WTC11 (cell line): ENCODE measurements at regions of chr11 and their contacts with region 1.

Region 1: DNA sequence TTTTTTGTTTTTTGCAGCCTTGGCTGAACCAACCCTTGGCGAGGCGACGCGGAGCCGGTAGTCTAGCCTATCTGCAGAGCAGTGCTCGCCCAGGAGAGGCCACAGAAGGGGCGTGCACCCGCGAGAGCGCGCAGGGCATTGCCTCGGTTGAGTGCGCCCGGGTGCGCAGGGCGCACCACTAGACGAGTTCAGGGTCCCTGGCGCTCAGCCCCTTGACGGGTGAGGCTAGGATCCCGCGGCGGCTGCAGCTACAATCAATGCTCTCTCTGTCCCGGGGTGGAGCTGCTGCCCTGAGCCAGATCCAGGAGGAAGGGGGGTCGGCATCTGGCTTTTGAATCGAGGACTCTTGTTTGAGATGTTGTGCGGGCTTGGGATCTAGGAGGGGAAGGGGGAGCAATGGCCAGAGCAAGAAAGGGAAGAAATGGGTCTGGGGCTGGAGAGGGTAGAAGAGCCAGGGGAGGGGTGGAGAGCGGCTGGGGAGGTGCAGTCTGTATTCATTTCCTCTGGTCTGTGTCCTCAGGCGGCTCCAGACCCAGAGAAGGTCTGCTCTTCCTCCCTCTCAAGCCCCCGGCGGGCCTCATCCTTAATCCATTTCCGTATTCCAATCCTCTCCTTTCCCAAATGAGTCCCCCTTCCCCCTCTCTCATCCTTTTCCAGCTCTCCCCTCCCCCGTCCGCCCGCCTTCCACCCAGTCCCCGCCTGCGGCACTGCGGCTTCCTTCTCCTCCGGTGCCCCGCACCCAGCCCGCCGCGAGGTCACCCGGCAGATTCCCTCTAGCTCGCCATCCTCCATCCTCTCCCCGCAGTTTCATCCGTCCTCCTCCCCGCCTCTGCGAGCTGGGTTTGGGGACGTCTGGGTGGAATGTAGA is 797 bp downstream of the THY1 start:
- DNase-seq: peak; percentile 53
- ATAC-seq: peak; percentile 12
- H3K4me3 Mint-ChIP-seq: peak overlapping the region; percentile 96
- H3K27ac Mint-ChIP-seq: peak overlapping the region; percentile 92
- H3K4me1 Mint-ChIP-seq: peaks cover 81% of the 10 kb centered on the region
- H3K27me3 Mint-ChIP-seq: no peaks in the 10 kb centered on the region
- CTCF ChIP-seq: no peak

Region 2: DNA sequence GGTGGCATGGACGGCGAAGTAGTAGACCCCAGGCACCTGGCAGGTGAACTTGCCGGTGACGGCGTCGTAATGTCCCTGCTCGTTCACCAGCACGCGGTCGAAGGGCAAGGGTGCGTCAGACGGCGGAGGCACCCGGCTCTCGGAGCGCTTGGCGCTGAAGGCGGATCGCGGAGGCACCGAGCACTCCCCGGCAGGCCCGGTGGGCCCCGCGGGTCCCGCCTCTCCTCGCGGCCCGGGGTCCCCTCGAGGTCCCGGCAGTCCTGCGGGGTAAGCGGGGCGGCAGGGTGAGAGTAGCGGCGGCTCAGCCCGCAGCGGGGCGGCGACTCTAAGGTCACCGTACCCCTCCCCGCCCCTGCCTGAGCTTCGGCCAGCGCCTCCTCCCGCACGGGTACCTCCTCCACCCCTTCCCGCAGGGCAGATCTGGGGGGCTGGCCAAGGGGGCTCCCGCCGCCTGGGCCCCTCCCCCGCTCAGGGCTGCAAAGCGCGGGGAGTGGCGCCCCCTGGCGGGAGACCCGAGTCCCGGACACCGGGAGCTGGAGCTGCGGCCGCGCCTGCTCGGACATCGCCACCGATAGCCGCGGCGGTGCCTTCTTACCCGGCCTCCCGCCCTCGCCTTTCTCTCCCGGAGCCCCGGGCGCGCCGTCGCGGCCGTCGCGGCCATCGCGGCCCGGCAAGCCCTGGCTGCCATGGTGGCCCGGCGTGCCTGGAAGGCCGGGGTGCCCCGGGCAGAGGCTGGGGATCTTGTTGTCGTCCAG is 82.4 kb before region 1 on chr11:
- CTCF ChIA-PET with region 1: interaction called, 16 read pairs
- POLR2A ChIA-PET with region 1: interaction called, 3 read pairs
- DNase-seq: peak; percentile 85
- ATAC-seq: peak; percentile 12
- H3K4me3 Mint-ChIP-seq: peak overlapping the region; percentile 100
- H3K27ac Mint-ChIP-seq: no peak overlapping the region
- H3K4me1 Mint-ChIP-seq: peaks cover 52% of the 10 kb centered on the region
- H3K27me3 Mint-ChIP-seq: peaks cover 53% of the 10 kb centered on the region
- CTCF ChIP-seq: peak; percentile 97

Region 3: DNA sequence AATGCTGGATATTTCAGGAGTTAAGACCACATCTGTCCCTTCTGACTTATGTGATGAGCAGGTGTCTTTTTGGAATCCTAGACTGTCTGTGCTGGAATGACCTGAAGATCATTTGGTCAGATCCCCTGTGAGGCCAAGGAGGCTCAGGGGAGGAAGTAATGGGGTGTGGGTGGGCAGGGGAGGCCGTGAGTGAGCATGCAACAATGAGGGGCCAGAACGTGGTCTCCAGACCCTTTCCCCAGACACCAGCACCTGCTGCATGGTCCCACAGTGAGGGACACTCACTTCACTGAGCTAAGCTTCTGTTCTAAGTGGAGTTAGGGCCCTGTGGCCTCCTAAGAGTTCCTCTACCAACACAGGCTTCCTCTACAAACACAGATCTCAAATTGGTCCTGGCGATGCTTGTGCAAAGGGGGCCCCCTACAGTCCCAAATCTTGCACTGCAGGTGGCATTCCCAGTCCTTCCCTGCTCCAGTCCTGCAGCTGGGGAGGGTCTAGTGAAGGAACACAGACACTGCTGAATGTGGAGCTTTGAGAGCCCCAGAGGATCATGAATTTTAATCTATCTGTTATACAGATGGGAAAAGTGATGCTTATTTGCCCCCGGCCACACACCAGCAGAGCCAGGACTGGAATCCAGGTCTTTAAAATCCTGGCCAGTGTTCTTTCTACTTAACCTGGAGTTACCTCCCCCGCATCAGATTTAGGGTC is 48.1 kb before region 1 on chr11:
- CTCF ChIA-PET with region 1: interaction called, 20 read pairs
- POLR2A ChIA-PET with region 1: interaction called, 3 read pairs
- DNase-seq: peak; percentile 92
- ATAC-seq: peak; percentile 71
- H3K4me3 Mint-ChIP-seq: no peak overlapping the region
- H3K27ac Mint-ChIP-seq: no peak overlapping the region
- H3K4me1 Mint-ChIP-seq: peaks cover 74% of the 10 kb centered on the region
- H3K27me3 Mint-ChIP-seq: peaks cover 1% of the 10 kb centered on the region; the same call in 1 of the 2 replicates
- CTCF ChIP-seq: peak; percentile 79

Region 4: GRCh38 chr11:119381181-119381988 is 40.8 kb before region 1 on chr11 and contains the start of gene USP2:
- CTCF ChIA-PET with region 1: interaction called, 20 read pairs
- POLR2A ChIA-PET with region 1: interaction called, 3 read pairs
- DNase-seq: peak; percentile 98
- ATAC-seq: peak; percentile 83
- H3K4me3 Mint-ChIP-seq: no peak within 1 kb of the TSS
- H3K27ac Mint-ChIP-seq: peak within 1 kb of the TSS; percentile 12; the same call in 1 of the 2 replicates
- H3K4me1 Mint-ChIP-seq: peaks cover 40% of the 10 kb centered on the region
- H3K27me3 Mint-ChIP-seq: peaks cover 20% of the 10 kb centered on the region
- CTCF ChIP-seq: peak; percentile 24; the same call in 1 of the 2 replicates
- total RNA-seq, gene USP2: 7.3 to 8.2 TPM (median 8.0 TPM) in 3 replicates

Region 5: GRCh38 chr11:119389611-119390254 is 32.4 kb before region 1 on chr11:
- CTCF ChIA-PET with region 1: interaction called, 10 read pairs
- POLR2A ChIA-PET with region 1: no interaction called
- DNase-seq: peak; percentile 79
- ATAC-seq: peak; percentile 98
- H3K4me3 Mint-ChIP-seq: no peak overlapping the region
- H3K27ac Mint-ChIP-seq: no peak overlapping the region
- H3K4me1 Mint-ChIP-seq: peaks cover under 1% of the 10 kb centered on the region
- H3K27me3 Mint-ChIP-seq: no peaks in the 10 kb centered on the region
- CTCF ChIP-seq: peak; percentile 33; the same call in 1 of the 2 replicates

Region 6: GRCh38 chr11:119432484-119433357 is 10.5 kb after region 1 on chr11:
- CTCF ChIA-PET with region 1: interaction called, 11 read pairs
- POLR2A ChIA-PET with region 1: interaction called, 12 read pairs
- DNase-seq: no peak
- ATAC-seq: peak; percentile 65
- H3K4me3 Mint-ChIP-seq: no peak overlapping the region
- H3K27ac Mint-ChIP-seq: no peak overlapping the region
- H3K4me1 Mint-ChIP-seq: peaks cover 42% of the 10 kb centered on the region
- H3K27me3 Mint-ChIP-seq: peaks cover 16% of the 10 kb centered on the region
- CTCF ChIP-seq: no peak